ENCODE measurements at regions of chr12 and their contacts with region 1.

Region 1: GRCh38 chr12:6533923-6534694 is at the start of gene GAPDH:
- DNase-seq: peak; percentile 89

Region 2: GRCh38 chr12:6493497-6494257 is 40.4 kb before region 1 on chr12 and contains the start of gene NCAPD2:
- CTCF ChIA-PET with region 1: interaction called, 4 read pairs
- POLR2A ChIA-PET with region 1: interaction called, 52 read pairs
- DNase-seq: peak; percentile 92

Region 3: GRCh38 chr12:6507102-6507998 is 26.8 kb before region 1 on chr12:
- CTCF ChIA-PET with region 1: interaction called, 7 read pairs
- POLR2A ChIA-PET with region 1: interaction called, 13 read pairs
- DNase-seq: no peak

Region 4: DNA sequence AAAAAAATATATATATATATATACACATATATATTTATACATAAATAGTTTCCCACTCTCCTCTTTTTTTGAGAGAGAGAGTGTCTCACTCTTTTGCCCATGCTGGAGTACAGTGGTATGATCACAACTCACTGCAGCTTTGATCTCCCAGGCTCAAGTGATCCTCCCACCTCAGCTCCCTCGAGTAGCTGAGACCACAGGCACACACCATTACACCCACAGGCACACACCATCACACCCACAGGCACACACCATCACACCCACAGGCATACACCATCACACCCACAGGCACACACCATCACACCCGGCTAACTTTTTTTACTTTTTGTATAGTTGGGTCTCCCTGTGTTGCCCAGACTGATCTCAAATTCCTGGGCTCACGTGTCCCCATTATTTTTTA is 13.9 kb before region 1 on chr12:
- CTCF ChIA-PET with region 1: interaction called, 3 read pairs
- POLR2A ChIA-PET with region 1: interaction called, 18 read pairs
- DNase-seq: no peak

Region 5: DNA sequence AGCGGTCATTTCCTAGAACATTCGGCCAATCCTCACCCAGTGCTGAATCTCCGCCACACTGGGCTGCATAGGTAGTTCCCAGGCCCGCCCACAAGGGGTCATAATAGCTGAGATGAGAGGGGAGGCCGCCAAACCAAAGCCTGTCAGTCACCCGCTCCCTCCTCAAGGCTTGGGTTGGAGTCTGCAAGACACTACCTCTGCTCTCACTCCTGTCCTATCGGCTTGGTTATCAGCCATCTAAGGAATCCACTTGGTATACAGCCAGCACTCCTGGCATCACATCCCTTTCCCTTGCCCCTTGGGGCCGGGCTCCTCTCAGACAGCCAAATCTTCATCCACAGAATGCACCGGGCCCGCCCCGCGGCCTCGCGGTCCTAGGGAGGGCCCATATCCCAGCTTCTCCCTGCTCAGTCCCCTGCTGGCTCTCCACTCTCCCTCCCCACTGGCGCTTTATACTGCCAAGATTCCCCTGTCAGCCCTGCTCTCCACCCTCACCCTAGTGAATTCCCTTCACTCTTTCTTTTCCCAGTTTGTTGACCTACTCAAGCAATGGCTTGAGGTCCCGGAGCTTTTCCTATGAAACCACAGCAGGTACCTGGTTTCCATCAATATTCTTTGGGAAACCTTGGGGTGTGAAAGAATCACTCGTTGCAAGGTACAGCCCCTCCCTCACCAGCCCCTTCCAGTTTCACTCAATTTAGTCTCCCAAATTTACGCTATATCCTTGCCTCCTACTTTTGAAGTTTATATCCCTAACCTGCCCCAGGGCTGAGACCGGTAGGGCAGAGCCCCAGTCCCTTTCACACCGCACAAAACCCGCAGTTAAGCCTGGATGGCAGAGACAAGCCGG is 20.3 kb after region 1 on chr12:
- CTCF ChIA-PET with region 1: interaction called, 72 read pairs
- POLR2A ChIA-PET with region 1: interaction called, 77 read pairs
- DNase-seq: peak; percentile 80

Region 6: DNA sequence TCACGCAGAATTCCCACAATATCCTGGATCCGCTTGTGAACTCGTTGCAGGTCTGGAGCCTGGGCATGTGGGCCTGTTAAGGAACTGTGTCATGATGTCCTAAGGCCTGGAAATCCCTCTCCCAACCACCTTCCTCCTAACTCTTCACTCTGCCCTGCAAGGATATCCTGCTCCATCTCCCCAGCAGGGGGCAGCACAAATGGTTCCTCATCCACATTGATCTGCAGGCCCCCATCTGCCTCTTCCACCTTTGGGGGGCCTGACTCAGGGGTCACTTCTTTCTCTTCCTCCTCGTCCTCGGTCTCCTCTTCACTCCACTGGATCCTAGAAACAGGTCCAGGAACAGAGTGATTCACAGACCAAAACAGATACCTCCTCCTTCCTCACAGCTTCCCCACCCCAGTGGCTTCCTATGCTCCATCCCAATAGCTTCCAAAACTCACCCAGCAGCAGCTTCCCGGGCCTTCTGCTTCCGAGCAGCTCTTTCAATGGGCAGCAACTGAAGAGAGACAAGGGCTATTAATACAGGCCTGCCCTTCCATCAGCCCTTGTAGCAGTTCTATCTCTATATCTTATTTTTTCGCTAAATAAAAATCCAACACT is 29.4 kb after region 1 on chr12:
- CTCF ChIA-PET with region 1: interaction called, 3 read pairs
- POLR2A ChIA-PET with region 1: interaction called, 13 read pairs
- DNase-seq: peak; percentile 59

Region 7: GRCh38 chr12:8120072-8120713 is 1586.1 kb after region 1 on chr12:
- CTCF ChIA-PET with region 1: no interaction called
- POLR2A ChIA-PET with region 1: no interaction called
- DNase-seq: no peak

Measured in HEK293T (cell line).